ENCODE measurements at regions of chr19 and their contacts with region 1.

Region 1: DNA sequence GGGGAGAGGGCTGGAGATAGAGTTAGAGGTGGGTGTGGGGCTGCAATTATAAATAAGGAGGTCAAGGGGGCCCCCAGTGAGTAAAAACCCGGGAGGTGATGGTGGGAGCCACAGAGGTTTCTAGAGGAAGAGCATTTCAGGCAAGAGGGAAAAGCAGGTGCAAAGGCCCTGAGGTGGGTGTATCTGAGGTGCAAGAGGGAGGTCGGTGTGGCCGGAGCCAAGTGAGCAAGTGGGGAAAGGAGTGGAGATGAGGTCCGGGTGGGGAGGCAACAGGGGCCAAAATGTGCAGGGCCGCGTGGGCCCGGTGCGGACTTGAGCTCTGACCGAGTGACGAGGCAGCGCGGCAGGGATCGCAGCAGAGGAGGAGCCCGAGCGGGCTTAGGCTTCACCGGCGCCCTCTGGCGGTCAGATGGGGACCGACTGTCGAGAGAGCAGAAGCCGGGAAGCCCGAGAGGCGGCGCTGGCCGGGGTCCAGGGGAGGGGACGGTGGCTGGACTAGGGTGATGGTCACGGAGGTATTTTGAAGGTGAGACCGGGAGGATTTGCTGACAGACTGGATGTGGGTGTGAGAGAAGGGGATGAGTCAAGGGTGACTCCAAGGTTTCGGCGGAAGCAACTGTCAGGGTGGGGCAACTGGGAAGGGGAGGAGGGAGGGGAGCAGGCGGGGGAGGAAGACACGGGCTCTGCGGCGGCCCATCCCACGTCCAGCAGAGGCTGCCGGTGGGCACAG is 17.7 kb upstream of the SPACA4 start:
- DNase-seq: peak; percentile 90
- H3K4me3 Mint-ChIP-seq: peak overlapping the region; percentile 78
- H3K27ac Mint-ChIP-seq: peak overlapping the region; percentile 88
- H3K4me1 Mint-ChIP-seq: peaks cover 23% of the 10 kb centered on the region
- H3K27me3 Mint-ChIP-seq: no peaks in the 10 kb centered on the region

Region 2: DNA sequence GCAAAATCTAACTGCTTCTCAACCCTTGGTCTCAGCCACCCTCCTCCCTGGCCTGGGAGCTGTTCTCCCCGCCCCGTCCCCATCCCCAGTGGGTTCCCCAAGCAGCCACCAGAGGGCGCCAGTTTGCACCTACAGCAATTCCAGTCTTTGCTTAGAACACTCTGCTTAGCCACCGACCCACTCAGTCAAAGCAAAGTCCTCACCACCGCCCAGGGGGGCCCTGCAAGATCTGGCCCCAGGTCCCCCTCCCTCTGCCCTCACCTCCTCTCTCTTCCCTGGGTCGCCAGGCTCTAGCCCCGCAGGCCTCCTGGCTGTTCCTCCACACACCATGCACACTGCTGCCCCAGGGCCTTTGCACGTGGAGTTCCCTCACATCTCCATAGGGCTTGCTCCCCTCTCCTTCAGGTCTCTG is 237.5 kb before region 1 on chr19:
- CTCF ChIA-PET with region 1: no interaction called
- POLR2A ChIA-PET with region 1: no interaction called
- DNase-seq: peak; percentile 86
- H3K4me3 Mint-ChIP-seq: no peak overlapping the region
- H3K27ac Mint-ChIP-seq: no peak overlapping the region
- H3K4me1 Mint-ChIP-seq: peaks cover 9% of the 10 kb centered on the region
- H3K27me3 Mint-ChIP-seq: no peaks in the 10 kb centered on the region

Region 3: GRCh38 chr19:48480558-48481500 is 108.0 kb before region 1 on chr19:
- CTCF ChIA-PET with region 1: no interaction called
- POLR2A ChIA-PET with region 1: no interaction called
- DNase-seq: peak; percentile 75
- H3K4me3 Mint-ChIP-seq: peak overlapping the region; percentile 67
- H3K27ac Mint-ChIP-seq: peak overlapping the region; percentile 91
- H3K4me1 Mint-ChIP-seq: peaks cover 27% of the 10 kb centered on the region
- H3K27me3 Mint-ChIP-seq: no peaks in the 10 kb centered on the region

Region 4: GRCh38 chr19:48608798-48609263 is 20.0 kb after region 1 on chr19:
- CTCF ChIA-PET with region 1: interaction called, 11 read pairs
- POLR2A ChIA-PET with region 1: no interaction called
- DNase-seq: peak; percentile 61
- H3K4me3 Mint-ChIP-seq: no peak overlapping the region
- H3K27ac Mint-ChIP-seq: peak overlapping the region; percentile 79
- H3K4me1 Mint-ChIP-seq: peaks cover 4% of the 10 kb centered on the region
- H3K27me3 Mint-ChIP-seq: no peaks in the 10 kb centered on the region